ENCODE measurements at regions of chr20 and their contacts with region 1.

Region 1: DNA sequence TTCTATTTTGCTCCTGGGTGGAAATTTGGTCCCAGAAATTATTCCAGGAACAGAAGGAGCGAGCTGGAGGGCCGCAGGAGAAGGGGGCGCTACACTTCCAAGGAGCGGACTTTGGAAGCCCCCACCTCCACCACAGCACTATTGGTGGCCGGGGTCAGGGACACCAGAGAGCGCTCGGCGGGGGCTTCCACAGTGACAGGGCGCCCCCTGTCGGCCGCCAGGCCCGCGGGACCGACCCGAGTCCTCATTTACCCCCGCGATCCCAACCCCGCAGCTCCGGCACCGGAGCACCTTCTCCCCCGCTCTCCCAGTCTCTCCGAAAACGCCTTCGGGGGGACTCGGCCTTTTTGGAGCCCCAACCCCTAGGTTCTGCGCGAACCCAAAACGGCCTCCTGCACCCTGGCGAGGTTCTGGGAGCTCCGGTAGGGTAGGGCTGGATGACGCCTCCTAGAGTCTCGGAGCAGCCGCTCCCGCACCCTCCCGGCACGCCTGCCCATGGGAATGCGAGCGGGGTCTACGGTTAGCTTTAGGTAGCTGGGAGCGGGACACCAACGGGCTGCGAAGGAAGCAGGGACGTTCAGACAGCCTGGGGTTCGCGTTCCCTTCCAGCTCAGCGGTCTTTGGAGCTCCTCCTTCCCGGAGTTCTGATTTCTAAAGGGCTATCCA is 2.4 kb upstream of the FOXA2 start:
- DNase-seq: no peak
- ATAC-seq: peak; percentile 45
- H3K4me3 ChIP-seq: peak overlapping the region; percentile 46 to 70
- H3K27ac ChIP-seq: peak overlapping the region; percentile 69
- H3K4me1 ChIP-seq: peaks cover 3% of the 10 kb centered on the region
- H3K27me3 ChIP-seq: peaks cover 2% of the 10 kb centered on the region; the same call in 1 of the 2 replicates
- CTCF ChIP-seq: peak; percentile 97

Region 2: GRCh38 chr20:22385602-22386305 is 201.0 kb before region 1 on chr20:
- CTCF ChIA-PET with region 1: interaction called, 14 read pairs
- POLR2A ChIA-PET with region 1: interaction called, 3 read pairs
- in situ Hi-C with region 1: no loop called
- intact Hi-C with region 1: loop called (anchors 5 kb)
- DNase-seq: no peak
- ATAC-seq: peak; percentile 73
- H3K4me3 ChIP-seq: no peak overlapping the region
- H3K27ac ChIP-seq: peak overlapping the region; percentile 58; the same call in 1 of the 2 replicates
- H3K4me1 ChIP-seq: peaks cover 33% of the 10 kb centered on the region
- H3K27me3 ChIP-seq: no peaks in the 10 kb centered on the region
- CTCF ChIP-seq: peak; percentile 84

Region 3: GRCh38 chr20:22453239-22454080 is 133.3 kb before region 1 on chr20:
- CTCF ChIA-PET with region 1: no interaction called
- POLR2A ChIA-PET with region 1: no interaction called
- in situ Hi-C with region 1: no loop called
- intact Hi-C with region 1: loop called (anchors 10 kb)
- DNase-seq: no peak
- ATAC-seq: no peak
- H3K4me3 ChIP-seq: no peak overlapping the region
- H3K27ac ChIP-seq: no peak overlapping the region
- H3K4me1 ChIP-seq: no peaks in the 10 kb centered on the region
- H3K27me3 ChIP-seq: no peaks in the 10 kb centered on the region
- CTCF ChIP-seq: peak; percentile 88

Region 4: DNA sequence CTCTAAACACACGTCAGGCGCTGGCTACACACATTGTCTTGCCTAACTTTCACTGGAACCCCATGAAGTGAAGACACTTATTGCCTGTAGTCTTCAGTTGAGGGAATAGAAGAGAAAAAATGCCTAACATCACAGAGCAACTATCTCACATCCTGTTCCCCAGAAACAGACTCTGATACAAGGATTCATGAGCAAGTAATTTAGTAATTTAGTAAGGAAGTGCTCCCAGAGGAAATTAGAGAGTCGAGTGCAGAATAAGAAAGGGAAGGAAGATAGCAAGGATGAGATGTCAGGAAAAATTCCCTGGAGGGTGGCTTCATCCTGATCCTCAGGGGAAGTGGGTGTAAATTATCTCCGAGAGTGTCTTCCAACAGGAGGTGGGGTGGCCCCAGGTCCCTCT is 106.4 kb before region 1 on chr20:
- CTCF ChIA-PET with region 1: no interaction called
- POLR2A ChIA-PET with region 1: no interaction called
- in situ Hi-C with region 1: no loop called
- intact Hi-C with region 1: no loop called
- DNase-seq: no peak
- ATAC-seq: no peak
- H3K4me3 ChIP-seq: no peak overlapping the region
- H3K27ac ChIP-seq: no peak overlapping the region
- H3K4me1 ChIP-seq: no peaks in the 10 kb centered on the region
- H3K27me3 ChIP-seq: no peaks in the 10 kb centered on the region
- CTCF ChIP-seq: no peak

Region 5: GRCh38 chr20:22533823-22534751 is 52.7 kb before region 1 on chr20:
- CTCF ChIA-PET with region 1: no interaction called
- POLR2A ChIA-PET with region 1: no interaction called
- in situ Hi-C with region 1: no loop called
- intact Hi-C with region 1: no loop called
- DNase-seq: no peak
- ATAC-seq: no peak
- H3K4me3 ChIP-seq: no peak overlapping the region
- H3K27ac ChIP-seq: no peak overlapping the region
- H3K4me1 ChIP-seq: no peaks in the 10 kb centered on the region
- H3K27me3 ChIP-seq: no peaks in the 10 kb centered on the region
- CTCF ChIP-seq: no peak